ENCODE measurements at regions of chr5 and their contacts with region 1.

Region 1: GRCh38 chr5:147558826-147559225 is 49.0 kb upstream of the DPYSL3 start:
- DNase-seq: peak; percentile 85
- H3K4me3 ChIP-seq: no peak overlapping the region
- H3K27ac ChIP-seq: peak overlapping the region; percentile 48 to 92 (median 66)
- H3K4me1 ChIP-seq: peaks cover 0 to 34% (median 31%) of the 10 kb centered on the region in 4 donors
- H3K27me3 ChIP-seq: no peaks in the 10 kb centered on the region
- CTCF ChIP-seq: peak; percentile 56 to 77 (median 72)
- EP300 ChIP-seq: no peak
- POLR2A ChIP-seq: no peak

Region 2: GRCh38 chr5:147223948-147224791 is 334.7 kb before region 1 on chr5:
- intact Hi-C with region 1: loop called (anchors 2 kb)
- DNase-seq: peak; percentile 66
- H3K4me3 ChIP-seq: no peak overlapping the region
- H3K27ac ChIP-seq: no peak overlapping the region
- H3K4me1 ChIP-seq: no peaks in the 10 kb centered on the region
- H3K27me3 ChIP-seq: no peaks in the 10 kb centered on the region
- CTCF ChIP-seq: peak; percentile 31 to 68 (median 56)
- EP300 ChIP-seq: no peak
- POLR2A ChIP-seq: no peak

Region 3: DNA sequence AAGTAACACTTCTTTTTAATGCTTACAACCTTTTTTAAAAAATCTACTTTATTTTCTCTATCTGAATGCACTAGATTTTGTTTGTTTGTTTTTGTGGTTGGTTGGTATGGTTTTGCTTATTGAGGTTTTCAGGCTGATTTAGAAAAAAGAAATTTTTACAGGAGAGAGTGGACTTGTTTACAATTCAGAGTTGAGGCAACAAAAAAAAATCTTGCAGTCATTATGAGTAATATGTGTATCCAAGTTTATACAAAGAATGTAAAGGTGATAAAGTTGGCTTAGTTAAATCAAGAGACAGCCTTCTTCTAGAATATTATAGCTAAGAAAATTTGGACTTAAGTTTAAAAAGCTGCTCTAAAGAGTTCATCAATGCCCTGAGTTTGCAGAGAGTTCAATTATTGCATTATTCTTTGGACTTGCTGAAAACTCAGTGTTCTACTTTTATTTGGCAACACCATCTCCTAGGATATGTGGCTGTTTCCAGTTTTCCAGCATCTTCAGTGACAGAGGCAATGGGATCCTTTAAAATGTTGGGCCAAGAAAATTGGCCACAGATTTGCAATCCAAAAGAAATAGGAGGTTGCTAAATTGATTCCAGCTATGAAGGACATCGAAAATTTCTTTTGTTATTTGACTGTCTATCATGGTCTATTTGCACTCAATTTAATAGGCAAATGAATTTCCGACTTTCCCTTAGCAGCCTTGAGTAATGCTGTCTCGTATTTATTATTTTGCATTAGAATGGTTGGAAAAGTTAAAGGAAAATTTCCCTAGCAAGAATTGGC is 313.3 kb before region 1 on chr5:
- intact Hi-C with region 1: no loop called
- DNase-seq: no peak
- H3K4me3 ChIP-seq: no peak overlapping the region
- H3K27ac ChIP-seq: peak overlapping the region in 2 of 4 donors; percentile 18 to 34
- H3K4me1 ChIP-seq: no peaks in the 10 kb centered on the region
- H3K27me3 ChIP-seq: no peaks in the 10 kb centered on the region
- CTCF ChIP-seq: no peak
- EP300 ChIP-seq: no peak
- POLR2A ChIP-seq: no peak

Region 4: DNA sequence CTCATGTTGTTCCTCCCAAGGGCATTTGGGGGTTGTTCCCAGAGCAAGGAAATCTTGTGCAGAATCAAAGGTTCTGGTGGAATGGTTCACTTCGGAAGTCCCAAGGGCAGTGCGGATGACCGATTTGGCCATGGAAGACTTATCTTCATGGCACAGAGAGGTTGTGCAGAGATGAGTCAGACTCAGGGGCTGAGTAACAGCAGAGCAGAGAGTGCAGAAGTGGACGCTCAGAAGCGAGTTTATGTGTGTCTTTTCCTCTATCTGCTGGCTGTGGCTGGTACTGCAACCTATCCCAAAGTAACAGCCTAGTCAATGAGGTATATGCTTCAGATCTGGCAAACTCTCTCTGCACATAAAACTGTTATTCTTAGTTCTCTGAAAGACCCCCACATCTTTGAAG is 167.0 kb before region 1 on chr5:
- intact Hi-C with region 1: loop called (anchors 5 kb)
- DNase-seq: peak; percentile 78
- H3K4me3 ChIP-seq: no peak overlapping the region
- H3K27ac ChIP-seq: peak overlapping the region in 3 of 4 donors; percentile 34 to 58 (median 49)
- H3K4me1 ChIP-seq: peaks cover 0 to 20% (median 7%) of the 10 kb centered on the region in 4 donors
- H3K27me3 ChIP-seq: no peaks in the 10 kb centered on the region
- CTCF ChIP-seq: peak; percentile 55 to 72 (median 56)
- EP300 ChIP-seq: no peak
- POLR2A ChIP-seq: no peak

Region 5: GRCh38 chr5:147403651-147404640 is 154.9 kb before region 1 on chr5:
- intact Hi-C with region 1: loop called (anchors 5 kb)
- DNase-seq: peak; percentile 93
- H3K4me3 ChIP-seq: no peak overlapping the region
- H3K27ac ChIP-seq: peak overlapping the region; percentile 77 to 94 (median 89)
- H3K4me1 ChIP-seq: peaks cover 2 to 75% (median 52%) of the 10 kb centered on the region in 4 donors
- H3K27me3 ChIP-seq: no peaks in the 10 kb centered on the region
- CTCF ChIP-seq: no peak
- EP300 ChIP-seq: peak; percentile 50 to 87 (median 78)
- POLR2A ChIP-seq: no peak

Region 6: DNA sequence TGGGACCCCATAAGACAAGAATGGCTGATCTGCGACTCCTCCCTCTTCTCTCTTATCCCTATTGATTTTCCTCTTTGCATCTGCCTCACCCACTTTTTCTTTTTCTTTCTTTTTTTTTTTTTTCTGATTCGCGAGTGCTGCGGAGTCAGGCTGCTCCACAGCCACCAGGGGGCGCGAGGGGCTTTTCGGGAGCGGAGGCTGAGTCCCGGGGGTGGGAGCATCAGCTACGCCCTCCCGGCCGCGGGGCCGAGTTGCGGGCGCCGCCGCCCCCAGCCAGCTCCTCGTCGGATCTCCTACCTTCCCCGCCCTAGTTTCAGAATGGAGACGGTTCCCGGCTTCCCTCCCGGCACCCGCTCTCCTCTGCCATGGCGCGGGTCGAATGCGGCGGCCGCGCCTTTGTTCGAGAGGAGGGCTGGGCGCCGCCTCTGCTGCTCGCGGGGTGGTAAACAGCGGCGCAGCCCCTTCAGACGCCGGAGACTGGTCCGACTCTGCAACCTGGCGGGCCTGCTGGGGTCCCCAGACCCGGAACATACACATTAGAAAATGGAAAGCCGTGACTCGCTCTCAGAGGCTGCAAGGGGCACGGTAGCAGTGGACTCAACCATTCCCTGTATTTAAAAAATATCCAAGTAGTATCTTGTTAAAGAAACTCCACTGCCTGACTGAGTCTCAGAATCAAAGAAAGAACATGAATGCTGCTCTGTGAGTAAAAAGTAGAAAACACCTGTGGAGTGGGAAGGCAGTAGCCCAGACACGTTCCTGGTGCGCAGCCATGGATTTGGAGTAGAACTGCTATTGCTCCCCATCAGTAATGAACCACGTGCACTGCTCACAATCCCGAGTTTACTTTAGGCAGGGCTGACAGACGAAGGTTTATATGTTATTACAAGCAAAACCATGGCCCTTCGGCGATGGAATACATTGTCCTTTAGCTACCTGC is 104.7 kb before region 1 on chr5:
- intact Hi-C with region 1: loop called (anchors 1 kb)
- DNase-seq: peak; percentile 96
- H3K4me3 ChIP-seq: peak overlapping the region; percentile 62 to 90 (median 89)
- H3K27ac ChIP-seq: peak overlapping the region; percentile 92 to 98 (median 97)
- H3K4me1 ChIP-seq: peaks cover 0 to 50% (median 43%) of the 10 kb centered on the region in 4 donors
- H3K27me3 ChIP-seq: no peaks in the 10 kb centered on the region
- CTCF ChIP-seq: peak; percentile 78 to 88 (median 84)
- EP300 ChIP-seq: peak in 2 of 4 donors; percentile 6 to 26
- POLR2A ChIP-seq: peak in 1 of 2 donors; percentile 9

Region 7: GRCh38 chr5:147509710-147510651 is 48.8 kb before region 1 on chr5 and contains the start of gene DPYSL3:
- intact Hi-C with region 1: loop called (anchors 2 kb)
- DNase-seq: peak; percentile 94
- H3K4me3 ChIP-seq: peak within 1 kb of the TSS; percentile 77 to 81 (median 80)
- H3K27ac ChIP-seq: peak within 1 kb of the TSS; percentile 87 to 94 (median 92)
- H3K4me1 ChIP-seq: peaks cover 0 to 47% (median 26%) of the 10 kb centered on the region in 4 donors
- H3K27me3 ChIP-seq: no peaks in the 10 kb centered on the region
- CTCF ChIP-seq: peak in 3 of 4 experiments; percentile 7 to 38 (median 21)
- EP300 ChIP-seq: peak in 2 of 4 donors; percentile 67 to 75
- POLR2A ChIP-seq: peak; percentile 20 to 58
- total RNA-seq, gene DPYSL3: 149 to 343 (median 184) TPM

Region 8: GRCh38 chr5:149422366-149423048 is 1863.7 kb after region 1 on chr5:
- intact Hi-C with region 1: no loop called
- DNase-seq: peak; percentile 97
- H3K4me3 ChIP-seq: peak overlapping the region in 1 of 4 donors; percentile 7
- H3K27ac ChIP-seq: peak overlapping the region; percentile 96 to 98 (median 98)
- H3K4me1 ChIP-seq: peaks cover 0 to 86% (median 66%) of the 10 kb centered on the region in 4 donors
- H3K27me3 ChIP-seq: no peaks in the 10 kb centered on the region
- CTCF ChIP-seq: no peak
- EP300 ChIP-seq: peak in 2 of 4 donors; percentile 38 to 82
- POLR2A ChIP-seq: no peak